ENCODE measurements at regions of chr9 and their contacts with region 1.

Region 1: GRCh38 chr9:72364679-72365524 is at the start of gene ZFAND5:
- DNase-seq: peak; percentile 96 to 100 (median 99)

Region 2: DNA sequence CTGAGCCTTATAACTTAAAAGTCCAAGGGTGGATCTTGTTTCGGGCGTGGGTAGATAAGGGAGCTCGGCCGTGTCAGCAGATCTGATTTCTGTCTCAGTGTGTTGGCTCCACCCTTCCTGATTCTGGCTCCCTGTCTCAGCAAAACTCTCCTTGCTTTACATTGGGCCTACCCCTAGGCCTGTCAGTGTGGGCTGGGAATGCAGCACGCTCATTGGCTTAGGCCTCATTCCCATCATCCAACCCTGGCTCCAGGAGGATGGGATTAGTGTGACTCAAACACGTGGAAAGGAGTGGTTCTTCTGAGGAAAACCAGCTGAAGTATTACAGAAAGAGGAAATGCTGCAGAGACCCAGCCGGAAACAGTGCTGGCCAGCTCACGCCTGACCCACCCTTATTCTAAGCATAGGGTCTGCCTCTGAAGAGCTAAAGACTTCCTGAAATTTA is 59.8 kb before region 1 on chr9:
- intact Hi-C with region 1: loop called (anchors 2 kb)
- DNase-seq: peak in 38 of 42 donors; percentile 11 to 71 (median 45)

Region 3: DNA sequence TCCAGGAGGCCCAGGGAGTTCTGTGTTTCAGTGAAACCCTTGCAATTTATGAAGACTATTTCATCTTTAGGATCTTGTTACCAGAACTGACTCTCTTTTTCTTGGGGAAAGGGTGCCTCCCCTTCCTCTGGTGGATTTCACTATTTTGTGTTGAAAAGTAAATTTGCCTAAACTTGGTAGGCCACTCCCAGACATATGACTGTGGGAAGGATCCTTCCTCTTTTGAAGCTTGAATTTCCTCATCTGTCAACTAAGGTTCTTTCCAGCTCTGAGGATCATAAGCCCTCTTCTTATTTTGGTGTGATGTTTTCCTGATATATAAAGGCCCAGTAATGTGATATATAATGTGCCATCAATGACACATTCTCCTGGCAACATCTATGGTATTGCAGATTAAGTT is 59.2 kb after region 1 on chr9:
- intact Hi-C with region 1: no loop called
- DNase-seq: no peak

Region 4: DNA sequence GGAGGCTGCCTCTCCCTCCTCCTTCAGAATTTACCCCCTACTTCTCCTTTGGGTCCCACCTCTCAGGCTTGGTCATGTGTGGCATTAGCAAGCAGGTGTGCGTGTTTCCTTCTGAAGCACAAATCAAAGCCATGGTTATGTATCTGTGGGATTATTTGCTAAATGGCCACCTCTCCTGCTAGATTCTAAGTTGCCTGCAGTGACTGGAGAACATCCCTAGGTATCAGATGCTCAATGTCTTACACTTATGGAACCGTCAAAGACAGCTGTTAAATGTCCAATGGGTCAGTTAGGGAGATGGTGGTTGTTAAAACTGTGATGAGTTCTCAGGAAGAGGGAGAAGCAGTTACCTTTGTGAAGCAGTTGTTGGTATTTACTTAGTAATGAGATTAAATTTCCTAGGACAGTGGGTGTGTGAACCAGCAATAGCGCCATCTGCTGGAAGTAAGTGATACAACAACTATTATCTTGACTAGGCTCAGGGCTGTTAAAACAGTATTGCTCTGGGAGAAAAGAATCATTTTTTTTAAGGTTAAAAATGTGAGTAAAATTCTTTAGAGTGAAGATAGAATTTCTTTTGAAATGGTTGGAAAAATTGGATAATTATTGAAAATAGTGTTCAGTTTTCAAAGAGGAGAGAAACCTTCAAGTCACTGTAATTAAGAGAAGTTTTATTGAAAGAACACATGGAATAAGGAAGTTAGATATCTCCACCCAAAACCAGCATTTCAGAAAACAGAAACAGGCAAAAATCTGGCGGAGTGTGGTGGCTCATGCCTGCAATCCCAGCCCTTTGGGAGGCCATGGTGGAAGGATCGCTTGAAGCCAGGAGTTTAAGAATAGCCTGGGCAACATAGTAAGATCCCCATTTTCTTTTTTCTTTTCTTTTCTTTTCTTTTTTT is 227.9 kb after region 1 on chr9:
- intact Hi-C with region 1: loop called (anchors 5 kb)
- DNase-seq: peak in 23 of 42 donors; percentile 14 to 79 (median 47)